CD4-positive, alpha-beta T cell (primary cell): ENCODE measurements at regions of chr1 and their contacts with region 1.

Region 1: DNA sequence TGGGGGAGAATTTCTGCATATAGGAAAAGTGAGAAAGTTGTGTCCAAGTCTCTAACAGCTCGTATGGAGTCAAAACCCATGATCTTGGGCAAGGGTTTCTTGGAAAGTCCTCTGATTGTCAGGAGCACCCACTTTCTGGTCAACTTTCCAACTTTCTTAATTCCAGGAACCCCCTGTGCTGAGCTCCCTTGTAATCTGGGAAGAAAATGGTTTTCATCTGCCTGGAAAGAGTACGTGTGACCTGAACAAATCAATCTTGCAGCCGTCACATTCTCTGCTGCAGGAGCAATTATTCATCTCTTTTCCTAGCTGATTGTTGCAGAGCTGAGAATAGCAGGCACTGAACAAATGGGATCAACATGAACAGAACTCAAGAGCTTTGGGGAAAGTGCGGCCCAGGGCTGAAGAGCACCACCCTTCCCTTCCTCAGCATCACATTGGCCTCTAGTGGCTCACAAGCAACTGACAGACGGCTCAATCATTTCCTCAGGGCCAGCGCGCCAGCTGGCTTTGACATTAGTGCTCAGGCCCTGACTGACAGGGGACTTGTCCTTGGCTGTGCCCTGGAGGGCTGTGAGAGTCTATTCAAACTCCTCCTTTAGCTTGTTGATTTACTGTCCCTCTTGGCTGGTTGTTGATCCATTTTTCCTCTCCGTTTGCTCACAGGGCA is 295.2 kb downstream of the HLX start:
- DNase-seq: peak in 1 of 14 experiments; percentile 14
- ATAC-seq: no peak
- H3K4me3 ChIP-seq: no peak overlapping the region
- H3K4me3 Mint-ChIP-seq: no peak overlapping the region
- H3K27ac ChIP-seq: no peak overlapping the region
- H3K27ac Mint-ChIP-seq: no peak overlapping the region
- H3K4me1 ChIP-seq: no peaks in the 10 kb centered on the region
- H3K4me1 Mint-ChIP-seq: no peaks in the 10 kb centered on the region
- H3K27me3 ChIP-seq: no peaks in the 10 kb centered on the region
- H3K27me3 Mint-ChIP-seq: no peaks in the 10 kb centered on the region
- CTCF ChIP-seq: no peak

Region 2: DNA sequence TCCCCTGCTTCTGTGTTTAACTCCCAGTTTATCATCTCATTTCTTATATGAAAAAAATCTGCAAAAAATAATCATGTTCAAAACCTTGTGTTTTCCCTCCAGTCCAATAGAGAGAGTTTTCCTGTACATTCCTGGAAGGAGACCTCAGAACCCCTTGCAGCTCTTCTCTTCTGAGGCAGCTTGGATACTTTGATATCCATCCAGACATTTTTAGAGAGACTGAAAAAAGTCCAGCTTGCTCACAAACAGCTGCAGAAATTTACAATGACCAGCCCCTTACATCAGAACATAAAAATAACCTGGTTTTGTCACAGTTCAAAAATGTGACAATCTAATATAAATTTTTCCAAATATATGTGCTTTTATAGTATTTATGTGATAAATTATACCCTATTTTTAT is 557.6 kb before region 1 on chr1:
- CTCF ChIA-PET with region 1: no interaction called
- POLR2A ChIA-PET with region 1: no interaction called
- intact Hi-C with region 1: no loop called
- DNase-seq: no peak
- ATAC-seq: no peak
- H3K4me3 ChIP-seq: no peak overlapping the region
- H3K4me3 Mint-ChIP-seq: no peak overlapping the region
- H3K27ac ChIP-seq: no peak overlapping the region
- H3K27ac Mint-ChIP-seq: no peak overlapping the region
- H3K4me1 ChIP-seq: no peaks in the 10 kb centered on the region
- H3K4me1 Mint-ChIP-seq: no peaks in the 10 kb centered on the region
- H3K27me3 ChIP-seq: no peaks in the 10 kb centered on the region
- H3K27me3 Mint-ChIP-seq: peaks cover 20% of the 10 kb centered on the region
- CTCF ChIP-seq: no peak

Region 3: DNA sequence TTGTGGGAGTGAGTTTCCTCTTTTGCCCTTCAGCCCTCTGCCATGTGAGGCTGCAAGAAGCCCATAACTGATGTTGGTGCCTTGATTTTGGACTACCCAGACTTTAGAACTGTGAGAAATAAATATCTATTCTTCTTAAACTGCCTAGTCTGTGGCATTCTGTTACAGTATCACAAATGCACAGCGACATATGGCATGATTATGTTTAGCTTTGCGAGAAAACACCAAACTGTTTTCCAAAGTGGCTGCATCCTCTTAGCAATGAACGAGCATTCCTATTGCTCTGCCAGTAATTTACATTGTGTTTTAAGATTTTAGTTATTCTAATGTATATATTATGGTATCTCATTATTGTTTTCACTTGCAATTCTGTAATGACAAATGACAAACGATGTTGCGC is 48.5 kb before region 1 on chr1:
- CTCF ChIA-PET with region 1: no interaction called
- POLR2A ChIA-PET with region 1: no interaction called
- intact Hi-C with region 1: no loop called
- DNase-seq: no peak
- ATAC-seq: no peak
- H3K4me3 ChIP-seq: no peak overlapping the region
- H3K4me3 Mint-ChIP-seq: no peak overlapping the region
- H3K27ac ChIP-seq: no peak overlapping the region
- H3K27ac Mint-ChIP-seq: no peak overlapping the region
- H3K4me1 ChIP-seq: no peaks in the 10 kb centered on the region
- H3K4me1 Mint-ChIP-seq: no peaks in the 10 kb centered on the region
- H3K27me3 ChIP-seq: no peaks in the 10 kb centered on the region
- H3K27me3 Mint-ChIP-seq: no peaks in the 10 kb centered on the region
- CTCF ChIP-seq: no peak

Region 4: GRCh38 chr1:221157026-221157761 is 17.3 kb before region 1 on chr1:
- CTCF ChIA-PET with region 1: no interaction called
- POLR2A ChIA-PET with region 1: no interaction called
- intact Hi-C with region 1: loop called in 1 of 2 experiments (anchors 1 kb)
- DNase-seq: peak in 3 of 14 experiments; percentile 3 to 32 (median 18)
- ATAC-seq: no peak
- H3K4me3 ChIP-seq: no peak overlapping the region
- H3K4me3 Mint-ChIP-seq: no peak overlapping the region
- H3K27ac ChIP-seq: no peak overlapping the region
- H3K27ac Mint-ChIP-seq: no peak overlapping the region
- H3K4me1 ChIP-seq: no peaks in the 10 kb centered on the region
- H3K4me1 Mint-ChIP-seq: no peaks in the 10 kb centered on the region
- H3K27me3 ChIP-seq: no peaks in the 10 kb centered on the region
- H3K27me3 Mint-ChIP-seq: no peaks in the 10 kb centered on the region
- CTCF ChIP-seq: no peak